Head of caudate nucleus (tissue), 42 donors: ENCODE measurements at regions of chr1 and their contacts with region 1.

Region 1: GRCh38 chr1:202405928-202406327 is 57.4 kb downstream of the PPP1R12B start:
- DNase-seq: peak in 1 of 42 donors; percentile 19

Region 2: DNA sequence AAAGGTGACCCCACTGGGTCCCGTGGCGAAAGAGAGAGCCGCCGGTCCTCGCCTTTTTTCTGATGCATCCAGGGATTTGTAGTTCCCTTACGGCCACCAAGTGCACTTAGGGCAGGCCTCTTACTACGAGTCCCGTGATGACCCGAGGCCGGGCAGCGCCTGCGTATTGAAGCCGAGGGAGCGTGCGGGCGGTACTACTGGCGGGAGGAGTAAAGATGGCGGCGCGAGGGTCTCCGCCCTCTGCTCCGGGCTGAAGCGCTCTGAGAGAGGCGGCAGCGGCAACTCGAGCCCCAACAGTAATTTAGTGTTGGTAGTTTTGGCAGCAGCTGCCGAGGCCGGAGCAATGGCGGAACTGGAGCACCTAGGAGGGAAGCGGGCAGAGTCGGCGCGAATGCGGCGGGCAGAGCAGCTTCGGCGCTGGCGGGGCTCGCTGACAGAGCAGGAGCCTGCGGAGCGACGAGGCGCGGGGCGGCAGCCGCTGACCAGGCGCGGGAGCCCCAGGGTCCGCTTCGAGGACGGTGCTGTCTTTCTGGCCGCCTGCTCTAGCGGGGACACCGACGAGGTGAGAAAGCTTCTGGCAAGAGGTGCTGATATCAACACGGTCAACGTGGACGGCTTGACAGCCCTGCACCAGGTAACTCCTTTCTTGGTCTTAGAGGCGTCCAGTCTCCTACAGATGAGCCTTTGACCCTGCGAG is 57.3 kb before region 1 on chr1 and contains the start of gene PPP1R12B:
- intact Hi-C with region 1: loop called (anchors 10 kb)
- DNase-seq: peak; percentile 96 to 100 (median 99)